ENCODE measurements at regions of chr19 and their contacts with region 1.

Region 1: DNA sequence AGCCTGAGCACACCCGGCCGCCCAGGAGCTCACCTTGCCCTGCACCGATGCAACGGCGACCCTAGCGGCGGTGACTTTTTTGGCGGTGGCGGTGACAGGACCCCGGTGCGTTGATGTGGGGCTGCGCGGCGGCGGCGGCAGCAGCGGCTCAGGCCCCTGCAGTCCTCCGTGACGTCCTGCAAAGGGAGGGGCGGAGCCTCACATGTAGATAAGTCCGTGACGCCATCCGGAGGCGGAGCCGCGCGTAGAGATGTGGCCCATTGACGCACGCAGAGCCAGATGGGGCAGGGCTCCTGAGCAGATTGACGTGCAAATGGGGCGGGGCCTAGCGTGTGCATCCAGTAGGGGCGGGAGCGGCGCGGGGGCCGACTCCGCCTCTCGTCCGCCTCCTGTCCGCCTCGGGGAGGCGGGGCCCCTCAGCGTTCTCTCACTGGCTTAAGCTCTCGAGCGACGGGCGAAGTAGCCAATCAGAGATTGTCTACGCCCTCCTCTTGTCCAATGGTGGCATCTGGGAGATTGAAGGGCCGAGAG is at the start of gene RAB3A:
- DNase-seq: peak; percentile 98 to 100
- ATAC-seq: peak; percentile 90 to 98 (median 91)
- H3K4me3 ChIP-seq: peak within 1 kb of the TSS; percentile 79
- H3K4me3 Mint-ChIP-seq: peak within 1 kb of the TSS; percentile 97
- H3K27ac ChIP-seq: peak within 1 kb of the TSS; percentile 81
- H3K27ac Mint-ChIP-seq: peak within 1 kb of the TSS; percentile 92 to 96
- H3K4me1 ChIP-seq: peaks cover 27% of the 10 kb centered on the region
- H3K4me1 Mint-ChIP-seq: peaks cover 23 to 32% of the 10 kb centered on the region in 2 donors
- H3K27me3 ChIP-seq: peaks cover 2% of the 10 kb centered on the region
- H3K27me3 Mint-ChIP-seq: peaks cover 4 to 9% of the 10 kb centered on the region in 2 donors
- CTCF ChIP-seq: no peak
- total RNA-seq, gene RAB3A: 5.2 to 7.8 (median 7.6) TPM

Region 2: GRCh38 chr19:18183529-18183928 is 20.4 kb before region 1 on chr19:
- intact Hi-C with region 1: no loop called
- DNase-seq: no peak
- ATAC-seq: no peak
- H3K4me3 ChIP-seq: no peak overlapping the region
- H3K4me3 Mint-ChIP-seq: no peak overlapping the region
- H3K27ac ChIP-seq: no peak overlapping the region
- H3K27ac Mint-ChIP-seq: no peak overlapping the region
- H3K4me1 ChIP-seq: peaks cover 5% of the 10 kb centered on the region
- H3K4me1 Mint-ChIP-seq: no peaks in the 10 kb centered on the region
- H3K27me3 ChIP-seq: no peaks in the 10 kb centered on the region
- H3K27me3 Mint-ChIP-seq: peaks cover 0 to 3% of the 10 kb centered on the region in 2 donors
- CTCF ChIP-seq: no peak

Region 3: DNA sequence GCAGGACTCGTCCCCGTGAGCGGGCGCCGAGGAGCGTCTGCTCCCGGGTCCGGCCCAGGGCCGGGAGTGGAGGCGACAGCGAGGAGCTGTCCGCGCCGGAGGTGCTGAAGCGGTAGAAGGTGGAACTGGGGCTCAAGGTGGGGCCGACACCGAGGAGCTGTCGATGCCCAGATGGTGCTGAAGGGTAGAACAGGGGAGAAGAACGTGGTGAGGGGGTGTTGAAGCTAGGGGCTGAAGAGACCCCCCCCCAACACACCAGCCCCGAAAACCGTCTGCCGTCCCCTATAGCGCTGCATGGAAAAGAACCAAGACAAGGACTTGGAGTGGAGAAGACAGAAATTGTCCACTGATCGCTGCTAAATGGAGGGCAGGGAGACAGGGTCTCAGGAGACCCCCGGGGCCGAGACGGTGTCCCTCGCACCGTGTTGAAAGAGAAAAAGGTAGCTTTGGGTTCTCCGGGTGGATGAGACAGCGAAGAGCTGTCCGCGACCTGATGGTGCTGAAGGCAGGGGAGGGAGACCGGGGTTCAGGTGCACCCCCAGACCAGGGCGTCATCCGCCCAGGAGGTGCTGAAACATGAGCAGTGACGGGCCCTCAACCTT is 29.4 kb after region 1 on chr19:
- intact Hi-C with region 1: no loop called
- DNase-seq: peak; percentile 65 to 74
- ATAC-seq: peak; percentile 61 to 98 (median 88)
- H3K4me3 ChIP-seq: no peak overlapping the region
- H3K4me3 Mint-ChIP-seq: no peak overlapping the region
- H3K27ac ChIP-seq: no peak overlapping the region
- H3K27ac Mint-ChIP-seq: no peak overlapping the region
- H3K4me1 ChIP-seq: peaks cover 6% of the 10 kb centered on the region
- H3K4me1 Mint-ChIP-seq: peaks cover 0 to 8% of the 10 kb centered on the region in 2 donors
- H3K27me3 ChIP-seq: peaks cover 20% of the 10 kb centered on the region
- H3K27me3 Mint-ChIP-seq: peaks cover 42 to 49% of the 10 kb centered on the region in 2 donors
- CTCF ChIP-seq: no peak

Region 4: DNA sequence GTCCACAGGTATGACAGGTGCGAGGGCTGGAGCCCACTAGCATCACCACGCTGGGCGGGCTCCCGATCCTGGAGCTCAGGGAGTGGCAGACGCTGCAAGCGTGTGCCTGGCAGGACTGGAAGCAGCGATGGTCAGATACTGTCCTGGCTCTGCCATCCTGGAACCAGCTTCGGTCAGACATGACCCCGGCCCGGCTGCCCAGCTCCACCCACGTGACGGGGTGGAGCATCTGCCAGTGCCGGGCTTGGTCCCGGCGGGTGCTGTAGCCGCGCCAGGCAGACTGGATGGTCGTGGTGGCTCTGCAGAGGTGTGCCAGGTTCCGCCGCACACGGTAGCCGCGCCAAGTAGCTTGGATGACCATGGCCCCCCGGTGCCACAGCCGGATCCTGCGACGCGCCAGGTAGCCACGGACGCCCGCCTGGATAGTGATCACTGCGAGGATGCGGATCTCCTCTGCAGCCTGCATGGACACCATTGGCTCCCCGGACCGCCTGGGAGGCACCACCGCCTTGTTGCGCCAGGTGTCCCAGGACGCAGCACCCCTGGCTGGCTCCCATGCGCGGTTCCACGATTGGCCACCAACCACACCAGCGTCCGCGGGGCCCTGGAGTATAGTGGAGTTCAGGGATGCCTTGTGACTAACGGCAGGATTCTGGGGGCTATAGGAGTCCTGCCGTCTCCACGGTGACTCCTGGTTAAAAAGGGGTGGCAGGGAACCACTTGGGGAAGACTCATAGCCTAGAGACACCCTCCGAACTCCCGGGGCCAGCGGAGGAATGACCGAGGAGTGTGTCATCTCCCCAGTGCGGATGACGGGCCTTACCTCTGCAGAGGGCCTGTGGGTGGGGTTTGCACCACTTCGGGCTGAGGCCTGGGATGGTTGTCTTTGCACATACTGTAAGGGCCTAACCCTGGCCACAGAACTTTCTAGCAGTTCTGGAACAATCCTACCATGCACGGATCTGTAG is 53.9 kb after region 1 on chr19:
- intact Hi-C with region 1: no loop called
- DNase-seq: peak in 1 of 2 donors; percentile 15
- ATAC-seq: no peak
- H3K4me3 ChIP-seq: no peak overlapping the region
- H3K4me3 Mint-ChIP-seq: no peak overlapping the region
- H3K27ac ChIP-seq: no peak overlapping the region
- H3K27ac Mint-ChIP-seq: no peak overlapping the region
- H3K4me1 ChIP-seq: peaks cover 14% of the 10 kb centered on the region
- H3K4me1 Mint-ChIP-seq: no peaks in the 10 kb centered on the region
- H3K27me3 ChIP-seq: no peaks in the 10 kb centered on the region
- H3K27me3 Mint-ChIP-seq: peaks cover 5 to 16% of the 10 kb centered on the region in 2 donors
- CTCF ChIP-seq: no peak

Region 5: DNA sequence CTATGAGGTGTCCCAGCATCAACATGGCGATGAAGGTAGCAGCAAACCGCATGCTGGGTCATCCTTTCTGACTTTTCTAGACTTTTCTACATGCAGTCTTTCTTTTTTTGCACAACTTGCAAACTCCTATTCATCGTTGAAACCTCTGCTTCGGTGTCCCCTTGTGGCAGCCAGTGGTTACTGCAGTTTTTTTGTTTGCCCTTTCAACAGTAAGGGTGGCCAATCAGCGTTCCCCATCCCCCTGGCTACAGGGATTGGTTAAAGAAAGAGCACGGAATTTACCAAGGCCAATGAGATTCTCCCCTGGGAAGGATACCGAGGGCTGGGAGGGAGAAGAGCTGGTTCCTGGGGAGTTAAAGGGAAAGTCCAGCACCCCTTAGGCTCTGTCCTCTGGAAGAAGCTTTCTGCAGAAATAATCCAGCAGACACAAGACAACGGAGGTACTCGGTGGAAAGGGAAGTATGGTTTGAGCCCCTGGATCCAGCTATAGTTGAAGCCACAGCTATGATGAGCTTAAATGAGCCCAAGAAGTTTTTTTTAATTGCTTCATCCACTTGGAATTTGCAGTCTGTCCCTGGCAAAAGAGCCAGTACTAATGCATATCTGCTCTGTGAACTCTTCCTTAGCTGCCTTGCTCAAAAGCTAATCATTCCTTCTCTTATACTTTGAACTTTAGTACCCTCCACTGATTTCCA is 124.6 kb after region 1 on chr19:
- intact Hi-C with region 1: loop called (anchors 1 kb)
- DNase-seq: peak; percentile 78 to 94
- ATAC-seq: peak; percentile 98 to 99 (median 98)
- H3K4me3 ChIP-seq: no peak overlapping the region
- H3K4me3 Mint-ChIP-seq: peak overlapping the region; percentile 45
- H3K27ac ChIP-seq: no peak overlapping the region
- H3K27ac Mint-ChIP-seq: peak overlapping the region; percentile 38 to 52
- H3K4me1 ChIP-seq: peaks cover 20% of the 10 kb centered on the region
- H3K4me1 Mint-ChIP-seq: peaks cover 15% of the 10 kb centered on the region in 2 donors
- H3K27me3 ChIP-seq: no peaks in the 10 kb centered on the region
- H3K27me3 Mint-ChIP-seq: no peaks in the 10 kb centered on the region
- CTCF ChIP-seq: peak; percentile 90

Measured in natural killer cell (primary cell).